PC-3 (cell line): ENCODE measurements at regions of chr14 and their contacts with region 1.

Region 1: DNA sequence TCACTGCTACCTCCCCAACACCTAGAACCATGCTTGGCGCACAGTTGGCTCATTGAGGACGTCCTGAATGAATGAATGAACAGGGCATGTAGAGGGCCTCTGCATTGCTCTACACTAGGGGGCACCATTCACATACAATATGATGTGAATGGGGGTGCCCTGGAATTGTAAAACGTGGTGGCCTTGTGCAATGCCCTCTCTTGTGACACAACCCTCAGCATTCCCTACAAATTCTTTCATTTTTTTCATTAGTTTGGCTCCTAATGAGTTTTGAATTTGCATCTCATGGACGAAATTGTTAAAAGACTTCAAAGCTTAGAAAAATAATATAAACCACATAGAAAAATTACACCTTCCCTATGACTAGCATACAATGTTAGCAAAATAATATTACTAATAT is 2.3 kb upstream of the DIO2 start:
- DNase-seq: peak; percentile 81
- ATAC-seq: peak; percentile 33; the same call in 1 of the 2 replicates
- H3K4me3 ChIP-seq: no peak overlapping the region
- H3K27ac ChIP-seq: peak overlapping the region; percentile 28
- H3K4me1 ChIP-seq: peaks cover 31% of the 10 kb centered on the region
- H3K27me3 ChIP-seq: no peaks in the 10 kb centered on the region
- CTCF ChIP-seq: peak; percentile 88

Region 2: DNA sequence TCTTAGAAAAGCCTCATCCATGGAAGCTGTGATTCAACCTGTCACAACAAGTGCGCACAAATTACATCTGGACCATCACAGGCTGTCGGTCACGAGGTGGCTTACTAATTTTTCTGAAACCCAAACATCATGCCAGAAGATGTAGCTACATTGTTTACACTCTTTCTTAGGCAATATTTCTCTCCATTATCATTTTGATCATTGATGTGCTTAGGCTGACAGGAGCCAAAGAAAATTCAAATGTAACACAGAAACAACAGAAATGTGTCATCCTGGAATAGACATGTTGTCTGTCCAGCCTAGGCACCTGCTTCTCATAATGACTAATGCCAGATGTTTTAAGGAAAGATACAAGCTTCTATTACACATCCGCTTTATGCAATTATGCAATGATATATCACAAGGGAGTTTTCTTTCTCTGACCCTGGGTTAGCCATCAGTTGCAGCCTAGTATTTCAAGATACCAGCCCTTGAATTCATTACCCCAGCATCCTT is 90.7 kb after region 1 on chr14:
- CTCF ChIA-PET with region 1: no interaction called
- POLR2A ChIA-PET with region 1: no interaction called
- intact Hi-C with region 1: no loop called
- DNase-seq: no peak
- ATAC-seq: no peak
- H3K4me3 ChIP-seq: no peak overlapping the region
- H3K27ac ChIP-seq: no peak overlapping the region
- H3K4me1 ChIP-seq: no peaks in the 10 kb centered on the region
- H3K27me3 ChIP-seq: no peaks in the 10 kb centered on the region
- CTCF ChIP-seq: no peak

Region 3: GRCh38 chr14:80356413-80356812 is 142.8 kb after region 1 on chr14:
- CTCF ChIA-PET with region 1: no interaction called
- POLR2A ChIA-PET with region 1: no interaction called
- intact Hi-C with region 1: loop called (anchors 10 kb)
- DNase-seq: peak; percentile 49
- ATAC-seq: peak; percentile 54; the same call in 1 of the 2 replicates
- H3K4me3 ChIP-seq: no peak overlapping the region
- H3K27ac ChIP-seq: no peak overlapping the region
- H3K4me1 ChIP-seq: no peaks in the 10 kb centered on the region
- H3K27me3 ChIP-seq: no peaks in the 10 kb centered on the region
- CTCF ChIP-seq: peak; percentile 83

Region 4: GRCh38 chr14:81269100-81269978 is 1055.7 kb after region 1 on chr14:
- CTCF ChIA-PET with region 1: no interaction called
- POLR2A ChIA-PET with region 1: no interaction called
- intact Hi-C with region 1: no loop called
- DNase-seq: peak; percentile 90
- ATAC-seq: peak; percentile 78
- H3K4me3 ChIP-seq: no peak overlapping the region
- H3K27ac ChIP-seq: no peak overlapping the region
- H3K4me1 ChIP-seq: peaks cover 32% of the 10 kb centered on the region
- H3K27me3 ChIP-seq: no peaks in the 10 kb centered on the region
- CTCF ChIP-seq: peak; percentile 90